ENCODE measurements at regions of chr19 and their contacts with region 1.

Region 1: GRCh38 chr19:3821857-3822364 is 35.7 kb upstream of the MATK start:
- DNase-seq: peak; percentile 93
- H3K4me3 Mint-ChIP-seq: no peak overlapping the region
- H3K27ac Mint-ChIP-seq: peak overlapping the region; percentile 77
- H3K4me1 Mint-ChIP-seq: peaks cover 23% of the 10 kb centered on the region
- H3K27me3 Mint-ChIP-seq: peaks cover 24% of the 10 kb centered on the region

Region 2: GRCh38 chr19:3783660-3784584 is 38.0 kb before region 1 on chr19:
- CTCF ChIA-PET with region 1: interaction called, 10 read pairs
- DNase-seq: peak; percentile 45
- H3K4me3 Mint-ChIP-seq: peak overlapping the region; percentile 76
- H3K27ac Mint-ChIP-seq: peak overlapping the region; percentile 55
- H3K4me1 Mint-ChIP-seq: peaks cover 23% of the 10 kb centered on the region
- H3K27me3 Mint-ChIP-seq: peaks cover 27% of the 10 kb centered on the region

Region 3: GRCh38 chr19:3868770-3869456 is 47.0 kb after region 1 on chr19 and contains the start of gene ZFR2:
- CTCF ChIA-PET with region 1: no interaction called
- DNase-seq: peak; percentile 45
- H3K4me3 Mint-ChIP-seq: no peak within 1 kb of the TSS
- H3K27ac Mint-ChIP-seq: no peak within 1 kb of the TSS
- H3K4me1 Mint-ChIP-seq: peaks cover 7% of the 10 kb centered on the region
- H3K27me3 Mint-ChIP-seq: peaks cover 56% of the 10 kb centered on the region

Measured in activated naive CD4-positive, alpha-beta T cell treated with anti-CD3 and anti-CD28 coated beads, Interleukin-2, amount 10 ng/mL, durations not matched to agents 7 days and 5 days (primary cell).